Ascending aorta (tissue), 2 donors: ENCODE measurements at regions of chr1 and their contacts with region 1.

Region 1: DNA sequence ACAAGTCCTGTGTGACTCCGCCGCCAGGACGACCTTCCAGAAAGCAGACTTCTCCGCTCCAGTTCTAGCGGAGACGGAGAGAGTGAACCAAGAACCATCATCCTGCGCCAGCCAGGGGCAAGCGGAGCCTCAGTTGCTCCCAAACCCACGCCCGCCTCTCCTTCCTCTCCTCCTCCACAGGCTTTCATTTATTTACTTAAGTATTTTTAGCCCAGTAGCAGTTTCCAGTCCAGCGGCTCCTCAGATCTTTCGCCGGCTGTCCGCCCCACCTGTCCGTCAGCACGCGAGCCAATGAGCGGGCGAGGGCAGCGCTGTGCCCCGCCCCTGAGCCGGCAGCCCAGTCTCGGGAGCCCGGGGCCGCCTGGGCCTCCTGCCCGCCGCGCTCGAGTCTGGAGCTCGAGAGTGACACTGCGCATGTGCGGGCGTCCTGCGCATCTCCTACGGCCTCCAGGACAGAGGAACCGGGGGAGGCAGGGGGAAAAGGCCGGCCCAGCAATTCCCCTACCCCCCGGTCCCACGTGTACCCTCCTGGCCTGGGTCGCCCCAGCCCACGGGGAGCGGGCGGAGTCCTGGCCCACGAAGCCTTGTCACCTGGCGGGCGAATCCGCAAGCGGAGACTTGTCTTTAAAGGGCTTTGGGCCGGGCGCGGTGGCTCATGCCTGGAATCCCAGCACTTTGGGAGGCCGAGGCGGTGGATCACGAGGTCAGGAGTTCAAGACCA is at the start of gene FALEC:
- DNase-seq: peak; percentile 89 to 98
- H3K4me3 ChIP-seq: peak within 1 kb of the TSS; percentile 64 to 65
- H3K27ac ChIP-seq: peak within 1 kb of the TSS; percentile 55 to 84
- H3K4me1 ChIP-seq: peaks cover 0 to 9% of the 10 kb centered on the region in 2 donors
- H3K27me3 ChIP-seq: no peaks in the 10 kb centered on the region
- CTCF ChIP-seq: peak; percentile 2 to 13 (median 4)
- total RNA-seq, gene FALEC: not detected

Region 2: GRCh38 chr1:150346316-150346715 is 169.2 kb before region 1 on chr1:
- intact Hi-C with region 1: no loop called
- DNase-seq: no peak
- H3K4me3 ChIP-seq: no peak overlapping the region
- H3K27ac ChIP-seq: no peak overlapping the region
- H3K4me1 ChIP-seq: no peaks in the 10 kb centered on the region
- H3K27me3 ChIP-seq: no peaks in the 10 kb centered on the region
- CTCF ChIP-seq: no peak

Region 3: GRCh38 chr1:150429805-150430204 is 85.7 kb before region 1 on chr1:
- intact Hi-C with region 1: no loop called
- DNase-seq: no peak
- H3K4me3 ChIP-seq: no peak overlapping the region
- H3K27ac ChIP-seq: no peak overlapping the region
- H3K4me1 ChIP-seq: no peaks in the 10 kb centered on the region
- H3K27me3 ChIP-seq: no peaks in the 10 kb centered on the region
- CTCF ChIP-seq: peak in 1 of 3 experiments; percentile 12

Region 4: GRCh38 chr1:150486964-150487762 is 28.3 kb before region 1 on chr1 and contains the start of gene TARS2:
- intact Hi-C with region 1: loop called (anchors 1 kb)
- DNase-seq: peak; percentile 91 to 99
- H3K4me3 ChIP-seq: peak within 1 kb of the TSS; percentile 70 to 73
- H3K27ac ChIP-seq: peak within 1 kb of the TSS; percentile 33 to 73
- H3K4me1 ChIP-seq: peaks cover 0 to 6% of the 10 kb centered on the region in 2 donors
- H3K27me3 ChIP-seq: no peaks in the 10 kb centered on the region
- CTCF ChIP-seq: peak; percentile 6 to 44 (median 27)
- total RNA-seq, gene TARS2: 10.9 TPM

Region 5: GRCh38 chr1:150629115-150629928 is 113.8 kb after region 1 on chr1 and contains the start of gene ENSA:
- intact Hi-C with region 1: loop called (anchors 1 kb)
- DNase-seq: peak; percentile 97 to 99
- H3K4me3 ChIP-seq: peak within 1 kb of the TSS; percentile 83 to 85
- H3K27ac ChIP-seq: peak within 1 kb of the TSS; percentile 88 to 97
- H3K4me1 ChIP-seq: peaks cover 6 to 10% of the 10 kb centered on the region in 2 donors
- H3K27me3 ChIP-seq: no peaks in the 10 kb centered on the region
- CTCF ChIP-seq: no peak
- total RNA-seq, gene ENSA: 138 TPM